OCI-LY7 (cell line): ENCODE measurements at regions of chr6 and their contacts with region 1.

Region 1: DNA sequence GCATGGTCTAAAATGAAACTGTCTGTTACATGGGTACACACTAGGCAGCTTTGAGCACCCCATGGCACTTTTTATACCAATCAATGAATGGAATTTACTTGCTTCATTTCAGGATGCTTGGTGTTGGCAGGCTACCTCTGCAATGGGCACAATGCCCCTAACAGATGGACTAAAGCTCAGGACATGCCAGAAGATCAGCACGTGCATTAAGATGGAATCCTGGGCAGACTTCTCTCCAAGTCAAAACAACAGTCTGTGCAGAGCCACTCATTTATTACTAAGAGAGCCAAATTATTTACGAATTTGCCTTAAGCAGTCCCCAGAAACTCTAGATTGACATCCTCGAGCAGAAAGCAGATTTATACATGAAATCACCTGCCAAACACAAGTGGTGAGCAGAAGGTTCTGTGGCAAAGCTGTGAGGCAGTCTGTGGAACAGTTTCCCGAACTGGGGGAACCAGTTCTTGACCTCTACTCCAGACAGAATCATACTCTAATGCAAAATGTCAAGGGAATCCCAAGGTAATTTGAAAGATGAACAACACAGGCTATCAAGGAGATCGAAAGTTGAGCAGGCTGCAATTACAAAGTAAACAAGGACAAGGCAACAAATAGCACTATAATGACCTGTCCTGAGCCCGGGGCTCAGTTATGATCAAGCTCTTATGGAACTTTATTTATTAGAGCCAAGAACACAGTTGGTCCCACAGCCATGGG is 56.0 kb upstream of the SCML4 start:
- DNase-seq: no peak
- H3K4me3 ChIP-seq: no peak overlapping the region
- H3K27ac ChIP-seq: no peak overlapping the region
- H3K4me1 ChIP-seq: peaks cover 23% of the 10 kb centered on the region
- CTCF ChIP-seq: no peak

Region 2: DNA sequence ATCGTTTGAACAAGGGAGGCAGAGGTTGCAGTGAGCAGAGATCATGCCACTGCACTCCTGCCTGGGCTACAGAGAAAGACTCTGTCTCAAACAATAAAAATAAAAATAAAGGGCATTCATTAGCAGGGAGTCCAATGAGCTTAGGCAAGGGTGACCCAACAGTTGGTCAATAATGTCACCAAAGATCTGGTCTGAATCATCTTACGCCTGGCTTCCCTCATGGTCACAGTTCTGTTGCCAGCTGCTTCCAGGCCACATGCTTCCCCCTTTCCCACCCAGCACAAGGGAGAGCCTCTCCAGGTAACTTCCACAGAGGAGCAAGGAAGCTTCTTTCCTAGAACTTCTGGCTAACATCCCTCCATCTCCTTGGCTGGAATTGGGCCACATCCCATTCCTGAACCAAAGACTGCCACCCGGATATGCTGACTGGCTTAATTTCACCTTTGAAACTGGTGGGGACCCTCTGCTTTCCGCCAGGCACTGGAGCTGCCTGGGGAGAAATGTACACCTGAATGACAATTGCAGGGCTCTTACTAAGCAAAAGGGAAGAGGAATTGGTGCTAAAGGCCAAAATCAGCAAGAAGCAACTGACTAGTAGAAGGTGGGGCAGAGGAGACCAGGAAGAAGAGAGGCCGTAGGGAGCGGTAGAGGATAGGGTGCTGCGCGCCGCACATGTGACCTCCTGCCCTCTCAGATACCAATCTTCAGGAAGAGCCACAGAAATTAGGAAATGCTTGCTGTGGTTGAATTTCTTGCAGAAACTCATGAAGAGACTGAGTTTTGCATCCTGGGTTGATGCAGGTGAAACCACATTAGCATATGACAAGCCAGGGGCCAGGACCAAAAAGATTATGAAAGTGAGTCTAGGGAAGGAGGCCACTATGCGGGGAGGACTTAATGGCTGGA is 47.7 kb before region 1 on chr6:
- CTCF ChIA-PET with region 1: no interaction called
- POLR2A ChIA-PET with region 1: no interaction called
- intact Hi-C with region 1: no loop called
- DNase-seq: no peak
- H3K4me3 ChIP-seq: no peak overlapping the region
- H3K27ac ChIP-seq: no peak overlapping the region
- H3K4me1 ChIP-seq: no peaks in the 10 kb centered on the region
- CTCF ChIP-seq: no peak

Region 3: GRCh38 chr6:107917451-107918375 is 37.6 kb after region 1 on chr6:
- CTCF ChIA-PET with region 1: no interaction called
- POLR2A ChIA-PET with region 1: no interaction called
- intact Hi-C with region 1: loop called (anchors 5 kb)
- DNase-seq: no peak
- H3K4me3 ChIP-seq: no peak overlapping the region
- H3K27ac ChIP-seq: no peak overlapping the region
- H3K4me1 ChIP-seq: no peaks in the 10 kb centered on the region
- CTCF ChIP-seq: no peak

Region 4: GRCh38 chr6:108186226-108186625 is 306.1 kb after region 1 on chr6:
- CTCF ChIA-PET with region 1: no interaction called
- POLR2A ChIA-PET with region 1: no interaction called
- intact Hi-C with region 1: no loop called
- DNase-seq: no peak
- H3K4me3 ChIP-seq: no peak overlapping the region
- H3K27ac ChIP-seq: no peak overlapping the region
- H3K4me1 ChIP-seq: no peaks in the 10 kb centered on the region
- CTCF ChIP-seq: no peak